ENCODE measurements at regions of chr9 and their contacts with region 1.

Region 1: GRCh38 chr9:109469646-109470358 is 28.3 kb downstream of the PTPN3 start:
- DNase-seq: peak; percentile 92
- H3K27ac ChIP-seq: no peak overlapping the region
- CTCF ChIP-seq: peak; percentile 99

Region 2: DNA sequence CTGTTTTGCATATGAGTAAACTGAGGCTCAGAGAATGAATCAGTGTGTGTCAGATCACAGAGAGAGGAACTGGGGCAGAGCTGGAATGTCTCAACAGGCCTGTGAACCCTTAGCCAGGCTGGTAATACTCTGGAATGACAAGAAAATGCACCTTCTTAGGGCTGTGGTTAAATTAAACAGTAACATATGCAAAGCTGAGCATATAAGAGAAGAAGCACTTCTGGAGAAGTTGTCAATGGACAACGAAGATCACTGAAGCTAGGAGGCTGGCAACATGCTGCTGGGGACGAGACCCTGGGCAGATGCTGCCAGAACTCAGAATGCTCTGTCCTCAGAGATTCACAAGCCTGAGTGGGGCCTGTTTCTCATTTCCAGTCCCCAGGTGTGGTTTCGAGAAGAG is 84.3 kb before region 1 on chr9:
- CTCF ChIA-PET with region 1: no interaction called
- POLR2A ChIA-PET with region 1: no interaction called
- DNase-seq: no peak
- H3K27ac ChIP-seq: no peak overlapping the region
- CTCF ChIP-seq: no peak

Region 3: GRCh38 chr9:109417585-109418544 is 51.9 kb before region 1 on chr9:
- CTCF ChIA-PET with region 1: no interaction called
- POLR2A ChIA-PET with region 1: no interaction called
- DNase-seq: no peak
- H3K27ac ChIP-seq: no peak overlapping the region
- CTCF ChIP-seq: no peak

Region 4: DNA sequence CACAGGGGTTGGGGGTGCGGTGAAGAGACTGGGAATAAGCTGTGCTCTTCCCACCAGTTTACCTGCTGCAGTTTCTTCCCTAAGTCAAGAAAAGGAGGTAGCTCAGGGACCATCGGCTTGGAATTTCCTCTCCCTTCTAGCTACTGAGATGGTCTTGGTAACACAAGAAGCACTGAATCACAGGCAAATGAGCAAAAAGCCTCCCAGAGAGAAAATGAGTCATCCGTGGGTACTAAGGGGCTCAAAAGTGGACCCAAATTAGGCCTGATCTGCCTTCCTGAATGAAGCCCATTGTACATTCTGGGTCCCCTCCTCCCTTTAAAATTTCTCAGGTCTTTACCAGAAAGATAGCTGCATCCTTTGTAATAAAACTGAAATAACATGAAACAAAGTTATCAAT is 21.6 kb before region 1 on chr9:
- CTCF ChIA-PET with region 1: interaction called, 129 read pairs
- POLR2A ChIA-PET with region 1: no interaction called
- DNase-seq: no peak
- H3K27ac ChIP-seq: no peak overlapping the region
- CTCF ChIP-seq: no peak

Region 5: DNA sequence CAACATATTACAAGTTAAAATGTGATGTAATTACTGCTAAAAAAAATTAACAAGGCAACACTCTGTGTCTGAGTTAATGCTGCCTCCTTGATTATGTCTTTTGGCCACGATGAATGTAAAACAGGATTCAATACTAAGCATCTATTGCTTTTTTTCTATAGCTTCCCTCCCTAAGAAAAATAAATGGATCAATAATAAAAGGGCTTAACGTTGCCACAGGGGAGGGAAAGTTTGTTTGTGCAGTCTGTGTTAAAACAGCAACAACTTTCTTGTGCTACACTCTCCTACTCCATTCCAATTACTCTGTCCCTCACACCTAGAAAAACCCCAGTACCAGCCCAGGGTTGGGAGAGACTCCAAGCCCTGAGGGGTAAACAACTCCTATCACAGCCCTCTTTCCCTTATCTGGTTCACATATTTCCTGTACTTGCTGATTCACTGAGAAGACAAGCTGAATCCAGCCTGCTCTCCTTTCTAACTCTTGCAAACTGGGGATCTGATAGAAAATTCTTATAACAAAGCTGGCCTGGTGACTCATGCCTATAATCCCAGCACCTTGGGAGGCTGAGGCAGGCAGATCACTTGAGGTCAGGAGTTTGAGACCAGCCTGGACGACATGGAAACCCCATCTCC is 16.5 kb before region 1 on chr9:
- CTCF ChIA-PET with region 1: interaction called, 31 read pairs
- POLR2A ChIA-PET with region 1: no interaction called
- DNase-seq: peak; percentile 95
- H3K27ac ChIP-seq: peak overlapping the region; percentile 86
- CTCF ChIP-seq: no peak

Region 6: DNA sequence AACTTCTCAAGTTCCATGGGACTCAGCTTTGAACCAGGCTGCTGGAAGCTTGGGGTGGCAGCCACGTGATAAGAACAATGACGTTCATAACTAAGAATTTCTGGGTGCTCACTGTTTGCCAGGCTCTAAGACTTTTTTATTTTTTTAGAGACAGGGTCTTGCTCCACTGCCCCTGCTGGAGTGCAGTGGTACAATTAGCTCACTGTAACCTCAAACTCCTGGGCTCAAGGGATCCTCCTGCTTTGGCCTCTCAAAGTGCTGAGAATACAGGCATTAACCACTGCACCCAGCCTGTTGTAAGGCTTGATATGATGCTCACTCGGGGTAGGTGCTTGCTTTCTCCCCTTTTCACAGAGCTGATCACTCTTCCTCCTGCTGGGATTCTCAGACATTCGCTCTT is 10.4 kb before region 1 on chr9:
- CTCF ChIA-PET with region 1: interaction called, 25 read pairs
- POLR2A ChIA-PET with region 1: interaction called, 3 read pairs
- DNase-seq: no peak
- H3K27ac ChIP-seq: no peak overlapping the region
- CTCF ChIP-seq: no peak

Region 7: DNA sequence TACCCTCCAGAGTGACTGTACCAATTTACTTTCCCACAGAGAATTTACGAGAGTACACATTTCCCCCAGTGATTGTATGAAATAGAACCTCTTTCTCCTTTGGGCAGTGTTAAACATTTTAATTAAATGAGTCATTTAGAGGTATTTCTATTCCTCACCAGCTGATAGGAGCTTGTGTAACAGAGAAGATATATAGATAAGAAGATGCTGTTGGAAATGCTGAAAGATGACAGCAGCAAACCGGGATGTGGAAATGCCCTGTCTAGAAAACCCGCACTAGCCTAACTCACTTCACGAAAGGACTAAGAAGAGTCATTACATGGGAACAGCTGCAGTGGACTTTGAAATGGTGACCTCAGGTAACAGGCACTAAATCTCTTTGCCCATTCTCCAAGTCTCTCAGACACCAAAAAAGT is 1500.2 kb after region 1 on chr9:
- CTCF ChIA-PET with region 1: no interaction called
- POLR2A ChIA-PET with region 1: no interaction called
- DNase-seq: peak; percentile 91
- H3K27ac ChIP-seq: no peak overlapping the region
- CTCF ChIP-seq: no peak

Measured in RWPE1 (cell line).